ENCODE measurements at regions of chr14 and their contacts with region 1.

Region 1: DNA sequence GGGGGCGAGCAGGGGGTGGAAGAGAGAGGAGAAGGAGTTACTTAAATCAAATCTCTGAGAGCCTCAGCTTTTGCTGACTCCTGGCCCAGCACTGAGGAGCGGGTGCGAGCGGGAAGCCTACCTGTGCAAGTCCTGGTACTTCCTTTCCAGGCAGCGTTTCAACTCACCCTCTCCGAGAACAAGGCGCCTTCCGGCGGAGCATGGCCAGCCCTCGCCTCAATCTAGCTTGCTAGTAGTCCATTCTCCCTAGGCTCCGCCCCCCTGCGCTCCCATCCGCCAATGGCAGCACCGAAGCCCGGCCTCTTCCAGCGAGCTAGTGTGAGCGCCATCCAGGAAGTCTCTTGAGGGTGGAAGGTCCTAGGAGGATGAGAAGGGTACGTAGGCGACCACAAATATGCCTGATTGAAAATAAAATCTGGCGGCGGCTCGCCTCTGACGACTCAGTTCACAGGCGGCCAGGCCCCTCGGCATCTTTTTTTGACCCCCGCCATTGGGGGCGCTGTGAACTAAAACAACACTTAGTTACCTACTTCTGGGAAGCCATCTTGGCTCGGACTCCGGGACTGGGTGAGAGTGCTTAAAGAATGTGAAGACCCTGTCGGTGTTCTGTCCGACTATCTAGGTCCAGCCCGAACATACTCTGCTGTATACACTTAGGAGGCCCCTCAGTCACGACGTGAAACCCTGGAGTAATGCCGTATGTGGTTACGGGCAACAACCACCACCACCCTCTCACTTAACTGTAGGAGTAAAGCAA is at the start of gene CHD8:
- DNase-seq: peak; percentile 99 to 100
- ATAC-seq: peak; percentile 98 to 99
- H3K4me3 ChIP-seq: peak within 1 kb of the TSS; percentile 68 to 97 (median 92)
- H3K27ac ChIP-seq: peak within 1 kb of the TSS; percentile 88 to 98 (median 94)
- H3K4me1 ChIP-seq: peaks cover 12 to 15% of the 10 kb centered on the region in 2 donors
- H3K27me3 ChIP-seq: no peaks in the 10 kb centered on the region
- CTCF ChIP-seq: peak; percentile 41 to 61 (median 54)
- POLR2A ChIP-seq: peak; percentile 27 to 58
- total RNA-seq, gene CHD8: 23.8 to 49.5 (median 37.6) TPM

Region 2: GRCh38 chr14:21298358-21298757 is 157.7 kb before region 1 on chr14:
- in situ Hi-C with region 1: no loop called
- intact Hi-C with region 1: no loop called
- DNase-seq: no peak
- ATAC-seq: no peak
- H3K4me3 ChIP-seq: no peak overlapping the region
- H3K27ac ChIP-seq: no peak overlapping the region
- H3K4me1 ChIP-seq: no peaks in the 10 kb centered on the region
- H3K27me3 ChIP-seq: peaks cover 0 to 15% (median 5%) of the 10 kb centered on the region in 3 donors
- CTCF ChIP-seq: no peak
- POLR2A ChIP-seq: no peak

Region 3: DNA sequence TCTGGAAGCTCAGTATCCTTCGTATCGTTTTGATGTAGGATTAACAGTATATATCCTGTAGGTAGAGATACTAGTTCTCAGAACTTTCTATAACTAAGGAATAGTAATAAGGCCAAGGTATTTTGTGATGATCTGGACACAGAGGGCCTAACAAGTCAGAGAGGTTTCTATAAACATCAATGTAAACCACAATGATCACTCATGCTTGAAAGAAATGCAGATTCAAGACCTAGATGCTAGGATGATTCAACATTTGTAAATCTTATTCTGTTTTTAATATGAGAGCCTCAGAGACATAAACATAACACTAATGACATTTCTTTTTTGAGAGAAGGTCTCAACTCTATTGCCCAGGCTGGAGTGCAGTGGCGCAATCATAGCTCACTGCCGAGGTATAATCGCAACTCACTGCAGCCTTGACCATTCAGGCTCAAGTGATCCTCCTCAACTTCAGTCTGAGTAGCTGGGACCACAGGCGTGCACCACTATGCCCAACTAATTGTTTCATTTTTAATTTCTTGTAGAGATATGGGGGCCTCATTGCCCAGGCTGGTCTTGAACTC is 88.4 kb before region 1 on chr14:
- in situ Hi-C with region 1: no loop called
- intact Hi-C with region 1: no loop called
- DNase-seq: no peak
- ATAC-seq: no peak
- H3K4me3 ChIP-seq: no peak overlapping the region
- H3K27ac ChIP-seq: no peak overlapping the region
- H3K4me1 ChIP-seq: peaks cover 0 to under 1% of the 10 kb centered on the region in 2 donors
- H3K27me3 ChIP-seq: no peaks in the 10 kb centered on the region
- CTCF ChIP-seq: no peak
- POLR2A ChIP-seq: no peak

Region 4: GRCh38 chr14:21437063-21437901 is 18.8 kb before region 1 on chr14:
- in situ Hi-C with region 1: no loop called
- intact Hi-C with region 1: loop called (anchors 1 kb)
- DNase-seq: peak; percentile 97 to 99
- ATAC-seq: peak; percentile 99 to 100
- H3K4me3 ChIP-seq: peak overlapping the region; percentile 76 to 99 (median 92)
- H3K27ac ChIP-seq: peak overlapping the region; percentile 81 to 88 (median 86)
- H3K4me1 ChIP-seq: peaks cover 23 to 25% of the 10 kb centered on the region in 2 donors
- H3K27me3 ChIP-seq: no peaks in the 10 kb centered on the region
- CTCF ChIP-seq: no peak
- POLR2A ChIP-seq: peak; percentile 30 to 41

Region 5: DNA sequence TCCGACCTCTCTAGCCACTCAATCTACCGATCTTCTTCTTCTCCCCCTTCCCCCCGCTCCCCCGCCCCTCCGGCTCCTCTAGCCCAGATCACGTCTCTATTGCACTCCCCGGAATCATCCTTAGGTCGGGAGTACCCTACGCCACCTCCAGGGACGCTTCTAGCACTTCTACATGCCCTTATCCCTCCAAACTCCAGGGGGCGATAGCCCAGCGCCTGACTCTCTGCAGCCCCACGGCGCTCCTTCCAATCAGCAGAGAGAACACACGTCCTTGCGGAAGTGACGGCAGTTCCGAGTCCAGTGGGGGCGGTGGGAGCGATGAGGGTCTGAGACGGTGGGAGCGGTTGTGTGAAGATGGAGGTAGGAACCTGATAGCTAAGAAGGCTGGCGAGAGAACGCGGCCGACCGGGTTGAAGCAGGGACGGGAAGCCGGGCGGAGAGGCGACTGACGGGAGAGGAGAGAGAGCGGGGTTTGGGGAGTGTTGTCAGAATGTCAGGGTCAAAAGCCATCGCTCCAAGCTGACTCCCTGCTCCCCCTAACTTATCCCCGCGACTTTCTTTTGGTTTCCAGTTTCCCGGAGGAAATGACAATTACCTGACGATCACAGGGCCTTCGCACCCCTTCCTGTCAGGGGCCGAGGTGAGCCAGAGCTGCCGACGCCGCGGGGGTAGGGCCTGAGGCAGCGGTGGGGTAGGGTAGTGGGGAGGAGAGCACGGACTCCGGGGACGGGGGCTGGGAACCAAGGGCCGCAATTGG is 21.0 kb after region 1 on chr14 and contains the starts of genes RAB2B and TOX4:
- in situ Hi-C with region 1: no loop called
- intact Hi-C with region 1: loop called (anchors 1 kb)
- DNase-seq: peak; percentile 97 to 98
- ATAC-seq: peak; percentile 98 to 99
- H3K4me3 ChIP-seq: peak within 1 kb of the TSS; percentile 66 to 90 (median 80)
- H3K27ac ChIP-seq: peak within 1 kb of the TSS; percentile 83 to 89 (median 87)
- H3K4me1 ChIP-seq: peaks cover 19 to 20% of the 10 kb centered on the region in 2 donors
- H3K27me3 ChIP-seq: no peaks in the 10 kb centered on the region
- CTCF ChIP-seq: peak; percentile 90 to 100 (median 99)
- POLR2A ChIP-seq: peak; percentile 68 to 87
- total RNA-seq, gene RAB2B: 4.8 to 13.6 (median 8.0) TPM
- total RNA-seq, gene TOX4: 57.2 to 135 (median 112) TPM

Region 6: GRCh38 chr14:21510735-21511657 is 54.9 kb after region 1 on chr14 and contains the start of gene METTL3:
- in situ Hi-C with region 1: no loop called
- intact Hi-C with region 1: loop called (anchors 1 kb)
- DNase-seq: peak; percentile 98 to 99
- ATAC-seq: peak; percentile 99 to 100
- H3K4me3 ChIP-seq: peak within 1 kb of the TSS; percentile 73 to 96 (median 87)
- H3K27ac ChIP-seq: peak within 1 kb of the TSS; percentile 89 to 96 (median 91)
- H3K4me1 ChIP-seq: peaks cover 16 to 17% of the 10 kb centered on the region in 2 donors
- H3K27me3 ChIP-seq: no peaks in the 10 kb centered on the region
- CTCF ChIP-seq: no peak
- POLR2A ChIP-seq: peak; percentile 52 to 63
- total RNA-seq, gene METTL3: 16.5 to 52.4 (median 34.6) TPM

Region 7: GRCh38 chr14:21557084-21557901 is 101.2 kb after region 1 on chr14:
- in situ Hi-C with region 1: no loop called
- intact Hi-C with region 1: loop called (anchors 1 kb)
- DNase-seq: peak; percentile 43 to 44
- ATAC-seq: peak; percentile 71 to 87
- H3K4me3 ChIP-seq: peak overlapping the region; percentile 17 to 48 (median 42)
- H3K27ac ChIP-seq: peak overlapping the region; percentile 6 to 24 (median 22)
- H3K4me1 ChIP-seq: no peaks in the 10 kb centered on the region
- H3K27me3 ChIP-seq: no peaks in the 10 kb centered on the region
- CTCF ChIP-seq: peak; percentile 61 to 76 (median 68)
- POLR2A ChIP-seq: no peak

Measured in gastrocnemius medialis (tissue), 4 donors.